ENCODE measurements at regions of chr16 and their contacts with region 1.

Region 1: GRCh38 chr16:57204675-57205074 is 18.5 kb downstream of the RSPRY1 start:
- DNase-seq: no peak
- H3K4me3 ChIP-seq: no peak overlapping the region
- CTCF ChIP-seq: no peak

Region 2: DNA sequence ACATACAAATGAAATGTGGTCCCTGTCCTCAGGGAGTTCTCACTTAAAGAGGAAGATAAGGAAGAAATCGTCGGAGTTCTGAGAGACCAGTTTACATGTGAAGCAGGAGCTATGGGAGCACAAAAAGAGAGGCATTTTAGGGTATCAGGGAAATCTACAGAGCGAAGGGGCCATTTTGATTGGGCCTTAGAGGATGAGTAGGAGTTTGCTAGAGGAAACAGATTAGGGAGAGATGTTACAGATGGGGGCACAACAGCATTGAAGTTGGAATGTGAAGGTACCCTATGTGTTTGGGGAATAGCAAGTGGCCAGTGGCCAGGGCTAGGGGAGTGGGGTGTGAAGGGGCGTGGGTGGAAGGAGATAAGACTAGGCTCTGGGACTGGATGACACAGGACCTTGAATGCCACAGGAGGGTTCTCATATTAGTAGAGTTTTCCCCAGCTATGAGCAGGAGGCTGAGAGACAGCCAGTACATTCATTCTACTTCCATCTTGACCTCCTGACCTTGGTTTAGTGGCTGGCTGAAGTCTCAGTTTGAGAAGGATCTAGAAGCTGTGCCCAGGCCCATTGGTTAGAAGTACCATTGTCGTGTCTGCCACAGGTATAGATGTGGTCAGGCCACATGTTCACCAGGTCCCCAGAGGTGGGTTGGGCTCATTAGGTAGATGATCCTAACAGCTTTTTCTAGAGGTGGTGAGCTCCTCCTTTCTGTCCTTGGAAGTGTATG is 77.5 kb before region 1 on chr16:
- CTCF ChIA-PET with region 1: no interaction called
- POLR2A ChIA-PET with region 1: no interaction called
- DNase-seq: no peak
- H3K4me3 ChIP-seq: no peak overlapping the region
- CTCF ChIP-seq: no peak

Region 3: DNA sequence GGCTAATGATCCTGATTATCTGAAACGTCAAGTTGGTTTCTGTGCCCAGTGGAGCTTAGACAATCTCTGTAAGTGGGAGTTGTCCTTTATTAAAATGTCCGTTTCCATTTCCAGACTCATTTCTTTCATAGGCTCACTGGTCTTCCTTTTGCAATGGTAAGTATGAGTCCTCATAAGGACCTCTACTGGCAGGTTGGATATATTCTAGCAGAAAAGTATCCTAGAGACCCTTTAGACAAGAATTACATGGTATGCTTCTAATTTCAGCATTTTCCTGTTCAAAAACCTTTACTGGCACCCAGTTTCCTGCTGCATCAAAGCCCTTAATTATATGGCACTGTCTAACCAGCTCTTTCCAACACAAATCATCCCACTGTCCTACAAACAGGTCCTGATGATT is 12.3 kb after region 1 on chr16:
- CTCF ChIA-PET with region 1: interaction called, 11 read pairs
- POLR2A ChIA-PET with region 1: no interaction called
- DNase-seq: no peak
- H3K4me3 ChIP-seq: no peak overlapping the region
- CTCF ChIP-seq: no peak